ENCODE measurements at regions of chr11 and their contacts with region 1.

Region 1: DNA sequence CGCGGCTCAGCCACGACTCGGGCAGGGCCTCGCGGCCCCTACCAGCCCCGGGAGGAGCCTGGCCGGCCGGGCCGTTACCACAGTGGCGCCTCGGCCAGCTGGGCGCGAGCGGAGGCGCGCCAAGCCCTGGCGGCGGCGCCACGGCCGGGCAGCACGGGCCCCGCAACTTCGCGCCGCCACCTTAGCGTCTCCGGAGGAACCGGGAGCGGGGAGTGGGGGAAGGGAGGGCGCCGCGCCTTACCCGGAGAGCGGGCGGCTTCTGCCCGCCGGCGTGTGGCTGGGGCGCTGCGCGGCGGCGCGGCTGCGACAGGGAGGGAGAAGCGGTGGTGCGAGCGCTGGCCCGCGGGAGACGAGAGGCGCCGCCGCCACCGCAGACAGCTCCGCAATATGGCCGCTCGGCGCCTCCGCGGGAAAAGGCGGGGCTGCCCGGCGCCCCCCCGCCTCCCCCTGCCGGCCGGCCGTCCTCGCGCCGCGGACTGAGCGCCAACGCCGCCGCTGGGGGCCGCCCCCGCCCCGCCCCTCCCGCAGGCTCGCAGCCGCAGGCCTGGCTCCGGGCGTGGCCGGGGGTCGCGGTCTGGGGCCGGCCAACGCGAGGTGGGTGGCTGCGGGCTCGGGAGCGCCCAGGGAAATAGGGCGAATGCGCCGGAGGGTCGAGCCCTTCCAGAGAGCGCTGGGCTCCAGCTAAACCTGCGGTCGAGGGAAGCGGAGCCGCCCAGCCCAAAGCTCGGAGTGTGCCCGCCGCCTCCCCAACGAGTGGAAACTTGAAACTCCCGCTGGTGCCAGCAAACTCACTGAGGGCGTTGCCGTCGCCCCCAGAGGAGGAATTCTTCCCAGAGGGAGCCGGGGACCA is at the start of gene RDX:
- DNase-seq: peak; percentile 79 to 88
- ATAC-seq: peak; percentile 91 to 93 (median 92)
- H3K4me3 ChIP-seq: peak within 1 kb of the TSS; percentile 97
- H3K27ac ChIP-seq: peak within 1 kb of the TSS; percentile 98
- H3K4me1 ChIP-seq: peaks cover 34% of the 10 kb centered on the region
- H3K27me3 ChIP-seq: no peaks in the 10 kb centered on the region
- CTCF ChIP-seq: peak; percentile 29
- total RNA-seq, gene RDX: 115 to 206 (median 144) TPM

Region 2: GRCh38 chr11:110251837-110252236 is 44.6 kb before region 1 on chr11:
- intact Hi-C with region 1: loop called (anchors 5 kb)
- DNase-seq: no peak
- ATAC-seq: peak; percentile 94 to 98 (median 96)
- H3K4me3 ChIP-seq: peak overlapping the region; percentile 8
- H3K27ac ChIP-seq: peak overlapping the region; percentile 76
- H3K4me1 ChIP-seq: peaks cover 7% of the 10 kb centered on the region
- H3K27me3 ChIP-seq: no peaks in the 10 kb centered on the region
- CTCF ChIP-seq: no peak

Region 3: GRCh38 chr11:110429731-110430266 is 133.3 kb after region 1 on chr11 and contains the start of gene FDX1:
- intact Hi-C with region 1: loop called (anchors 5 to 10 kb)
- DNase-seq: peak; percentile 84 to 89
- ATAC-seq: peak; percentile 93 to 94 (median 94)
- H3K4me3 ChIP-seq: peak within 1 kb of the TSS; percentile 87
- H3K27ac ChIP-seq: peak within 1 kb of the TSS; percentile 92
- H3K4me1 ChIP-seq: peaks cover 33% of the 10 kb centered on the region
- H3K27me3 ChIP-seq: no peaks in the 10 kb centered on the region
- CTCF ChIP-seq: peak; percentile 66
- total RNA-seq, gene FDX1: 14.0 to 23.7 (median 15.6) TPM

Measured in psoas muscle (tissue), 8 donors.